Heart left ventricle (tissue), 16 donors: ENCODE measurements at regions of chr4 and their contacts with region 1.

Region 1: GRCh38 chr4:107183155-107183774 is 147.2 kb upstream of the DKK2 start:
- DNase-seq: peak in 1 of 5 donors; percentile 16
- ATAC-seq: peak; percentile 47 to 94 (median 84)
- H3K4me3 ChIP-seq: no peak overlapping the region
- H3K27ac ChIP-seq: no peak overlapping the region
- H3K4me1 ChIP-seq: no peaks in the 10 kb centered on the region
- H3K27me3 ChIP-seq: no peaks in the 10 kb centered on the region
- CTCF ChIP-seq: peak; percentile 63 to 85 (median 74)
- POLR2A ChIP-seq: no peak

Region 2: DNA sequence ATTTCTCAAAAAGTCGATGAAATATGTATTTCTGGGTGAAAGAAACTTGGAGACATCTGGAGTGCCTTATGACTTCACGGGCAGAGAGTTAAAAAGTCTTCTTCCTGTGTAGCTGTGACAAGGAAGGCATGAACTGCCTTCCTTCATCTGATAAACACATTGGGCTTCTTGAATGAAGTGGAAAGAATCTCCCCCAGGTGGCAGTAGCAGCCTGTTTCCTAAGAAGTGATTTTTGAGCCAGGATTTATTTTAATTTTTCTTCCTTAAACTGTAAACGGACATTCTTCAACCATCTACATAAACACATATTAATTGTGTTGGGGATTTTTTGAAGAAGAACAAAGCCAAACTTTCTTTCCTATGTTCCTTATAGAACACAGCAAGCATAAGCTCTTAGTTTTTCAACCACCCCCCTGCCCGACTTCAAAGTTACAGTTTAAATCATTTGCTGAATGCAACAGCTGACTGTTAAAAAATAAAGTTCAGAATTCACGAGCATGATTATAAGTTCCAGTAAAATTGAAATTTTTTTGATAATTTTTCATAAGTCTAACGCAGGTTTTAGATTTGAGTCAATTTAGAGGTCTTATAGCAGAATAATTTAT is 813.7 kb before region 1 on chr4:
- intact Hi-C with region 1: loop called in 1 of 10 experiments (anchors 10 kb)
- DNase-seq: no peak
- ATAC-seq: no peak
- H3K4me3 ChIP-seq: no peak overlapping the region
- H3K27ac ChIP-seq: no peak overlapping the region
- H3K4me1 ChIP-seq: peaks cover 0 to 19% (median 7%) of the 10 kb centered on the region in 12 donors
- H3K27me3 ChIP-seq: peaks cover 0 to 5% (median 0%) of the 10 kb centered on the region in 9 donors
- CTCF ChIP-seq: peak; percentile 36 to 72 (median 54)
- POLR2A ChIP-seq: no peak

Region 3: GRCh38 chr4:107037199-107037584 is 146.1 kb before region 1 on chr4:
- intact Hi-C with region 1: loop called in 2 of 10 experiments (anchors 5 to 10 kb)
- DNase-seq: peak in 3 of 5 donors; percentile 27 to 59 (median 29)
- ATAC-seq: peak in 3 of 4 donors; percentile 41 to 59 (median 53)
- H3K4me3 ChIP-seq: peak overlapping the region in 9 of 12 donors; percentile 1 to 55 (median 41)
- H3K27ac ChIP-seq: no peak overlapping the region
- H3K4me1 ChIP-seq: peaks cover 0 to 35% (median 16%) of the 10 kb centered on the region in 12 donors
- H3K27me3 ChIP-seq: peaks cover 16 to 86% (median 46%) of the 10 kb centered on the region in 9 donors
- CTCF ChIP-seq: peak in 6 of 12 donors; percentile 14 to 49 (median 40)
- POLR2A ChIP-seq: no peak

Region 4: DNA sequence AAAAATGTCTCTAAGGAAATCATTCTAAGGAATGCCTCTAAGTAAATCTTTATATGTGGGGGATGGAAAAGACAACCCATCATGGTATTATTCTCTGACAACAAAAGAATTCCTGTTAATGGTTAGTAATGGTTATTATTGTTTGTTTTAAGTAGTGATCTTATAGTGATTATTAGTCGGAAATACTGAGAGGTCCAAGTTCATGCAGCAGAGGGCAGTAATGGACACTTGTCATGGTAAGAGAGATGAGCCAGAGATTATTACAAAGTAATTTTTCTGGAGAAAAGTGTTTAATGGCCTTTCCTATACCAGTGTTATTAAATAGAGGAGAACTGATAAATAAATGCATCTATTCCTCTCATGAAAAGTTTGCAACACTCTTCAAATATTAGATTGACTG is 139.1 kb before region 1 on chr4:
- intact Hi-C with region 1: loop called in 3 of 10 experiments (anchors 5 to 10 kb)
- DNase-seq: no peak
- ATAC-seq: no peak
- H3K4me3 ChIP-seq: no peak overlapping the region
- H3K27ac ChIP-seq: no peak overlapping the region
- H3K4me1 ChIP-seq: no peaks in the 10 kb centered on the region
- H3K27me3 ChIP-seq: peaks cover 0 to 17% (median 0%) of the 10 kb centered on the region in 9 donors
- CTCF ChIP-seq: peak in 2 of 12 donors; percentile 7 to 14
- POLR2A ChIP-seq: no peak

Region 5: DNA sequence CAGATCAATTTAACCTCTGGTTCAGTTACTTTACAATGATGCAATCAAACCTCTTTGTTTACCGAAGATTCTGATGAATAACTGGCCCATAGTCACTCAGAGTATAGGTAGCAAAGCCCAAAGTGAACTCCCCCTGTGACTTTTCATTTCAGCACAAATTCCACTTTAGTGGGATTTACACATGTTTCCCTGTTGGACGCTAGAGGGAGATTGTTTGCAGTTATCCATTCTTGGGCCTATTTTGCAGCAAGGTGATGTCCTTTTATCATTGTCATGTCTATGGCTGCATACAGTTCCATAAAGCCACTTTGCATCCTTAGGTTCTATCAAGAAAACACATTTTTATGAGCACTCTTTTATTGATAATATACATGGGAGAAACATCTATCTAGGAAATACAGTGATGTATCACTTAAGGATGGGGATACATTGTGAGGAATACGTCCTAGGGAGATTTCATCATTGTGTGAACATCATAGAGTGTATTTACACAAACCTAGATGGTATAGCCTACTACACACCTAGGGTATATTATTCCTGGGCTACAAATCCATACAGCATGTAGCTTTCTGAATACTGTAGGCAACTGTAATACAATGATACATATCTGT is 132.6 kb before region 1 on chr4:
- intact Hi-C with region 1: loop called in 4 of 10 experiments (anchors 5 to 10 kb)
- DNase-seq: no peak
- ATAC-seq: no peak
- H3K4me3 ChIP-seq: no peak overlapping the region
- H3K27ac ChIP-seq: no peak overlapping the region
- H3K4me1 ChIP-seq: no peaks in the 10 kb centered on the region
- H3K27me3 ChIP-seq: no peaks in the 10 kb centered on the region
- CTCF ChIP-seq: peak; percentile 14 to 59 (median 30)
- POLR2A ChIP-seq: no peak

Region 6: DNA sequence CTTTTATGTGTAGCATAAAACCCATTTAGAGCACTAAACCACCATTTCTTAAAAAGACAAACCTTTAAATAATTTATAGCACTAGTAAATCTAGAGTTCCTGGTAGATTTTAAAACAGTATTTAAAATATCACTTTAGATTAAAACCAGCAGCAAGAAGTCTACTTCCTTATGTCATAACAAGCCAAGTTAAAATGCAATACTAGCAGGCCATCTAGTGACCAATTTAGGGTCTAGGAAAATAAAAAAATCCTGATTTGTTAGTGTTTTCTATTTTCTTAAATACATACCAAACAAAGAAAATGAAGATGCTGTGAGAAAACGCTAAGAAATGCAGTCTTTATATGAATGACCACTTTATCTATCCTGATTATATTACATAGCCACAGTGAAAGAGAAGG is 482.9 kb after region 1 on chr4:
- intact Hi-C with region 1: loop called in 1 of 10 experiments (anchors 10 kb)
- DNase-seq: no peak
- ATAC-seq: no peak
- H3K4me3 ChIP-seq: no peak overlapping the region
- H3K27ac ChIP-seq: no peak overlapping the region
- H3K4me1 ChIP-seq: peaks cover 0 to 14% (median 1%) of the 10 kb centered on the region in 12 donors
- H3K27me3 ChIP-seq: no peaks in the 10 kb centered on the region
- CTCF ChIP-seq: peak in 9 of 12 donors; percentile 13 to 56 (median 39)
- POLR2A ChIP-seq: no peak